Left ventricle myocardium superior (tissue), 1 donor: ENCODE measurements at regions of chr2 and their contacts with region 1.

Region 1: DNA sequence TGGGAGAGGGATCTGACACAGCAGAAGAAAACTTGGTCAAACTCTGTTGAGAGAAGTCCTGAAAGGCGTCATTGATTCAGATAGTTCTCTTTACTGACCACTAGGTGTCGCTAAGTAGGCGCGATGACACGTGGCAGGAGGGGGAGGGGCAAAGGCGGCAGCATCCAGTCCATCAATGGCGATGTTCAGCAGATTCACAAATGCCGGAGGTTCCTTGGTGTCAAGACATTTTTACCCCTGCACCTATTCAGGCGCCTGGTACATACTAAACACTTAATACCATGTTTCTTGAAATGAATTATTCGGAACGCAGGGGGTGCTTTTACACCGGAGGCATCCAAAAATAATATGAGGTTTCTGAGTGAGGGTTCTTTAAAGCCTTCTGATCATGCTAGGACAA is 3.0 kb upstream of the PLEK start:
- DNase-seq: peak; percentile 87
- ATAC-seq: peak; percentile 77

Region 2: GRCh38 chr2:68441179-68441993 is 79.3 kb after region 1 on chr2:
- intact Hi-C with region 1: loop called (anchors 5 kb)
- DNase-seq: peak; percentile 63
- ATAC-seq: peak; percentile 90